ENCODE measurements at regions of chr14 and their contacts with region 1.

Region 1: GRCh38 chr14:50116181-50116956 is at the start of gene VCPKMT:
- DNase-seq: peak; percentile 93 to 98
- ATAC-seq: peak; percentile 98
- total RNA-seq, gene VCPKMT: 4.3 to 5.4 TPM

Region 2: DNA sequence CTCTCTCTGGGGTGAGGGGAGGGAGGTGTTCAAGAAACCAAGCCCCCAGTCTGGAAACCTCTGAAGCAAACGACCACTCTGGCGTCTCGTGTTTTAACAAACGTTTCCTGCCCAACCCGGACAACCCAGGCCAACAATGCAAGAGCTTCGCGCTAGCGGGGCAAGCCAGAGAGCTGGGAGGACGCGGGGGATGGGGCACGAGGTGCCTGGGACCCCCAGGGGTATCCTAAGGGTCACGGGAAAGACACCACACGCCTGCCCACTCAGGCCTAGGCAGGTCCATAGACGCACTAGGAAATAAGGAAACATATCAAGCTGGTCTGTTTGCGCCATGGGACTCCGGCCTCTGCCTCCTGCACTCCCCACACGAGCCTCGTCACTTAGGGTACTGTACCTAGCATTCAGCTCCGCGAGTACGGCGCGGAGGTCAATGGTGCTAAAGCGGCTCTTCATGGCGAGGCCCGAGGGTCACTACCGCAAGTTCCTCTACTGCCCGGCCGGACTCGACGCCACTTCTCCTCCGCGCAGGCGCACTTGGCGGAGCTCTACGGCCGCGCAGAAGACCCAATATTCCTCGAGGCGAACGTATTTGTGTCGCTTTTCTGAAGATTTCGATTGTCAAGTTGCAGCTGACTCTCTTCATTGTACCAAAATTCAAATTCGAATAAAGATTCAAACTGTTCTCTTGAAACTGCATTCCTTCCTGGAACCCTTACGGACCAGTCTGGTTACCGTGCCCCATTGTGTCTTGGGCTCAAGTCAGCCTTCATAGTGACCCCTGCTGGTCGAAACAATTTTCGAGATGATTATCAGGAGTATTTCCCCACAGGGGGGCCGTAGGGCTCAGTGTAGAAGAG is 263.8 kb before region 1 on chr14 and contains the start of gene NEMF:
- intact Hi-C with region 1: loop called in 1 of 2 experiments (anchors 10 kb)
- DNase-seq: peak; percentile 80 to 90
- ATAC-seq: peak; percentile 79
- total RNA-seq, gene NEMF: 53.2 to 62.1 TPM

Region 3: DNA sequence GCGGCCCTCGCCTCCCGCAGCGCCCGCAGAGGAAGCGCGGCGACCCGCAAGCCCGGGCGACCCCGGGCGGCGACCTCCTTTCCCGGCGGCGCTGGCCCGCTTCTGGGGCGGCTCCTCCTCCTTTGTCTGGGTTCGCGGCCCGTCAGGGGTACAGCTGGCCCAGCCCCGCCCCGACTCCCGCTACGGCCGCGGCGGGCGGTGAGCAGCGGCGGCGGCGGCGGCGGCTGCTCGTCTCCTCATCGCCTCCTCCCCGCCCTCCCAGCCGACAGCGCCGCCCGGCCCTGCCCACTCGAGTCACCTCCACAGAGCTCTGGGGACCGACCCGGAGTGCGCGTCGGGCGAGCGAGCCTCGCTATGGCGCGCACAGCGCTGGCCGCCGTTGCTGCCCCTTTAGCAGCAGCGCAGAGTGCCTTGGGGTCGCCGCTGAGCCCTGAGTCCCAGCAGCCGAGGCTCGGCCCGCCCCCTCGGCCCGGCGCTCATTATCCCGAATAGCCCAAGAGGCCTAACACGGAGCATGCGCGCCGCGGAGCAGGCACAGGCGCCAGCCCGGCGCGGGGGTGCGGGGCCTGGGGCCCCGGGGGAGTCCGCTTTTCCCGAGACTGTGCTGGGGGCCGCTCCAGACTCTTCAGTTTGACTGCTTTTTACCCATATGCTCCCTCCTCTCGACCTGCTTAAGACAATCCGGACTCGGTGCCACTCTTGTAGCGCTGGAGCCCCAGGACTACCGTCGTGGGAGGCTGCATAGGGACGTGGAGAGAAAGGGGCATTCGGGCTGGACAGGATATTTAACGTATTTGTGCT is 115.3 kb after region 1 on chr14 and contains the start of gene SOS2:
- intact Hi-C with region 1: no loop called
- DNase-seq: peak; percentile 85 to 90
- ATAC-seq: peak; percentile 90
- total RNA-seq, gene SOS2: 34.2 to 50.3 TPM

Measured in left colon (tissue), 2 donors.